ENCODE measurements at regions of chr9 and their contacts with region 1.

Region 1: DNA sequence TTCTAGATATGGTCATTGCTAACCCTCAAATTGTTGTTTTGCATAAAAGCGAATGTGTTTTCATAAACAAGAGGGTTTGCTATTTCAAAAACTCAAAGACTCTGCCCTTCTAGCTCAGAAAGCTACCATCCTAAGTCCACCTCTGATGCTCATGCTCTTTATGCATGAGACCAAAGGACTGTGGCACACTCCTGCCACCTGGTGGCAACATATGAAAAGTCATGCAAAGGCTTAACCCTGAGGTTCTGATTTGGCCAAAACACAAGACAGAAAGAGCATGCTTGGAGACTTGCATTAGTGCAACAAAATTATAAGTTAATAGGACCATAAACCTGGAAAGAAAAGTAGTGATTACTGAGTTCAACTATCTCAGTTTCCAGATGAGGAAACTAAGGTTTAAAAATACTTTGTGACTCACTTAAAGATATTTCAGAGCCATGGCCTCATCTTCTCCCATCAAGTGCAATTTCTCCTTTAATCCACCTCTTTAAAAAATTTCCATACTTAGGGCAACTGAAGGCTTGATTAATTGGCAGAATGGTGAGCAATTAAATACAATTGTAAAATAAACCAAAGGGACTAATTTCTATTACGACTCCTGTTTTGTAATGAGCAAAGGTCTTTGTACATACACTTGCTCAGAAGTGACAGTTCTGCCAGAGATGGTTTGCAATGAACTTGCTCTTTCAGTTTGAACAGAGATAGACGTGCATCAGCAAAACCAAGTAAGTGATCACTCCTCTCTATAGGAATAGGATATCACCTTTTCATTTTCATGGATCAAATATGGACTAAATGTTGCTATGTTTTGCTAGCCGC is 110.7 kb upstream of the RAD23B start:
- DNase-seq: peak; percentile 75
- H3K27ac ChIP-seq: no peak overlapping the region
- CTCF ChIP-seq: peak; percentile 98

Region 2: GRCh38 chr9:107039542-107039941 is 132.8 kb before region 1 on chr9:
- CTCF ChIA-PET with region 1: no interaction called
- POLR2A ChIA-PET with region 1: no interaction called
- DNase-seq: no peak
- H3K27ac ChIP-seq: no peak overlapping the region
- CTCF ChIP-seq: no peak

Region 3: DNA sequence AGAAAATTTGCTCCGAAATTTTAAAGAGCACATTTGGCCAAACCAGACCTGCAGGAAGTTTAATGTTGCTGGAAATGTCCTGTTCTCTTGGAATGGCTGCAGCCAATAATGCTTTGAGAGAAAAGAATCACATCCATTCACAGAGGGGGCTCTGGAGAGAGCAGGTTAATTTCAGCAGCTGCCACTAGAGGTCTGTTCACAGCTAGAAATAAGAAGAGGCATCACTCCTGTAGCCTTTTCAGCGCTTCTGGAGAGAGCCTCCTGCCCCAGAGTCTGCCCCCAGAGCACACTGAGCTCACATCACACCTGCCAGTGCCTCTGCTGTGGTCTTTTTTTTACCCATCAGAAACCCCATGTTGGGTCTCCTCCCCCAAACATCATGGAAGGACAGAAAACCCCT is 14.0 kb before region 1 on chr9:
- CTCF ChIA-PET with region 1: interaction called, 11 read pairs
- POLR2A ChIA-PET with region 1: no interaction called
- DNase-seq: peak; percentile 59
- H3K27ac ChIP-seq: no peak overlapping the region
- CTCF ChIP-seq: peak; percentile 21; the same call in 1 of the 2 replicates

Region 4: GRCh38 chr9:107212613-107213012 is 40.2 kb after region 1 on chr9:
- CTCF ChIA-PET with region 1: no interaction called
- POLR2A ChIA-PET with region 1: no interaction called
- DNase-seq: no peak
- H3K27ac ChIP-seq: no peak overlapping the region
- CTCF ChIP-seq: no peak